ENCODE measurements at regions of chr17 and their contacts with region 1.

Region 1: DNA sequence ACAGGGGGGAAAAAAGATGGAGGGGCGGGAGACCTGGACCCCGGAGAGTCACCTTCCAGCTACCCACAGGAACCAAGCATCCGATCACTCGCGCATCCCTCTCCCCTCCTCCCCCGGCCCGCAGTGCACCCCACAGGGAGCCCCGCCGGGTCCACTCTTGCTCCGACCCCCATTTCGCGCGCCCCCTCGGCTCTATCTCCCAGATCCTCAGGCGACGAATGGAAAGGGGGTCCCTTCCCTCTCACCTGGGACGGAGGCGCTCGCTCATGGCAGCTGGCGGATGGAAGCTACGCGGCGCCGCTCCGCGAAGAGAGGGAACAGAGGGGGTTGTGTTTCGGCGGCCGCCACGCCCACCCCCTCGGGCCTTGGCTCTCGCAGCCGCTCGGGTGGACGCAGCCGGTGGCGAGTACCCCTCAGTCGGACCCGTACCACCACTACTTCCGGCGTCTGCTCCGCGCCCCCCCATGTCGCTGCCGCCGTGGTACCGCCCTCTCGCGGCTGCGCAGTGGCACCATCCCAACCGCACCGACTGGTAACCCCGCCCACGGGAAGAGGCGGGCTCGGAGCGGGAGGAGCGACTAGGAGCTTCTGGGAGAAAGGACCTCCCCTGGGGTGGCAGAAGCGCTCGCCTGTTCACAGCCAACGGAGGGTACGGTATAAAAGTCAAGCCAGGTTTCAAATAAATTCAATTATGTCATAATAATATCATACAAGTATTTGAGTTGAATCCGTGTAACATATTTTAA is 29.7 kb downstream of the CPSF4L start:
- DNase-seq: peak; percentile 93 to 97 (median 96)
- ATAC-seq: peak; percentile 85 to 92
- H3K4me3 Mint-ChIP-seq: peak overlapping the region; percentile 87 to 97 (median 92)
- H3K27ac Mint-ChIP-seq: peak overlapping the region; percentile 94 to 99 (median 97)
- H3K4me1 Mint-ChIP-seq: peaks cover 30 to 74% (median 71%) of the 10 kb centered on the region in 4 donors
- H3K27me3 Mint-ChIP-seq: no peaks in the 10 kb centered on the region

Region 2: DNA sequence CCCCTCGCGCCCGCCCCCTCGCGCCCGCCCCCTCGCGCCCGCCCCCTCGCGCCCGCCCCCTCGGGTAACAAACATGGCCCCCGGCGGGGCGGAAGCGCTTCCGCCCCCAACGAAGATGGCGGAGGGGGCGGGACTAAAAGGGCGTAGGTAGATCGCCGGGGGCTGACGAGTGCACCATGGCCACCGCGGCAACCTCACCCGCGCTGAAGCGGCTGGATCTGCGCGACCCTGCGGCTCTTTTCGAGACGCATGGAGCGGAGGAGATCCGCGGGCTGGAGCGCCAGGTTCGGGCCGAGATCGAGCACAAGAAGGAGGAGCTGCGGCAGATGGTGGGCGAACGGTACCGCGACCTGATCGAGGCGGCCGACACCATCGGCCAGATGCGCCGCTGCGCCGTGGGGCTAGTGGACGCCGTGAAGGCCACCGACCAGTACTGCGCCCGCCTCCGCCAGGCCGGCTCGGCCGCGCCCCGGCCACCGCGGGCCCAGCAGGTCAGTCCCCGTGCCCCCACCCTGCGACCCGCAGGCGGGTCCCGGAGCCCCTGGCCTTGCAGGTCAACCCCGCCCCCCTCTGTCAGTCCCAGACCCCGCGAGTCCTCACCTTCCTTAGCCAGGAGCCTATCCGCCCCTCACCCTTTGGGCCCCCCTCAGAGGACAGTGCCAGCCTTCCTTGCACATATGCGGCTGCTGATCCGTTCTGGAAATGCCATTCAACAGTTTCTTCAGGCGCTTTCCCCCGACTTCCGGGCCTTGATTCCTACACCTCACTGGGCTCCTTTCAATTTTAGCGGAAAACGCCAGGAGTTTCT is 38.9 kb before region 1 on chr17 and contains the start of gene COG1:
- POLR2A ChIA-PET with region 1: interaction called, 59 read pairs
- DNase-seq: peak; percentile 54 to 94 (median 78)
- ATAC-seq: peak; percentile 87 to 90
- H3K4me3 Mint-ChIP-seq: peak within 1 kb of the TSS; percentile 93 to 100 (median 96)
- H3K27ac Mint-ChIP-seq: peak within 1 kb of the TSS; percentile 75 to 99 (median 96)
- H3K4me1 Mint-ChIP-seq: peaks cover 13 to 42% (median 29%) of the 10 kb centered on the region in 4 donors
- H3K27me3 Mint-ChIP-seq: no peaks in the 10 kb centered on the region
- polyA plus RNA-seq, gene COG1: 17.0 to 38.0 (median 30.5) TPM

Region 3: GRCh38 chr17:73203135-73203787 is 28.8 kb before region 1 on chr17:
- POLR2A ChIA-PET with region 1: interaction called, 59 read pairs
- DNase-seq: peak in 2 of 10 donors; percentile 36 to 37
- ATAC-seq: peak; percentile 56 to 63
- H3K4me3 Mint-ChIP-seq: peak overlapping the region; percentile 52 to 81 (median 73)
- H3K27ac Mint-ChIP-seq: peak overlapping the region; percentile 89 to 96 (median 92)
- H3K4me1 Mint-ChIP-seq: peaks cover 20 to 55% (median 33%) of the 10 kb centered on the region in 4 donors
- H3K27me3 Mint-ChIP-seq: no peaks in the 10 kb centered on the region

Region 4: DNA sequence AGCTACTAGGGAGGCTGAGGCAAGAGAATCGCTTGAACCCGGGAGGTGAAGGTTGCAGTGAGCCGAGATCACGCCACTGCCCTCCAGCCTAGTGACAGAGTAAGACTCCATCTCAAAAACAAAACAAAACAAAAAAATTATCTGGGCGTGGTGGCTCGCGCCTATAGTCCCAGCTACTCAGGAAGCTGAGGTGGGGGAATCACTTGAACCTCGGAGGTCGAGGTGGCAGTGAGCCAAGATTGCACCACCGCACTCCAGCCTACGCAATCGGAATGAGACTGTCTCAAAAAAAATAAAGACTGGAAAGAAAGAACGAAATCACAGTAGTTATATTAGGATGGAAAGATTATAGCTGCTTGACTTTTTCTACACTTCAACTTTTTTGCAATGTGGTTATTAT is 20.3 kb before region 1 on chr17:
- POLR2A ChIA-PET with region 1: interaction called, 29 read pairs
- DNase-seq: peak; percentile 62 to 91 (median 80)
- ATAC-seq: peak; percentile 88 to 91
- H3K4me3 Mint-ChIP-seq: peak overlapping the region; percentile 64 to 88 (median 80)
- H3K27ac Mint-ChIP-seq: peak overlapping the region; percentile 92 to 99 (median 95)
- H3K4me1 Mint-ChIP-seq: peaks cover 28 to 58% (median 50%) of the 10 kb centered on the region in 4 donors
- H3K27me3 Mint-ChIP-seq: no peaks in the 10 kb centered on the region